Dorsolateral prefrontal cortex (tissue), 120 donors: ENCODE measurements at regions of chr1 and their contacts with region 1.

Region 1: GRCh38 chr1:111656086-111657017 is 36.8 kb downstream of the RAP1A start:
- DNase-seq: peak in 1 of 10 donors; percentile 29
- H3K4me3 ChIP-seq: no peak overlapping the region
- H3K27ac ChIP-seq: peak overlapping the region in 24 of 59 donors; percentile 1 to 57 (median 24)
- H3K27me3 ChIP-seq: no peaks in the 10 kb centered on the region
- CTCF ChIP-seq: peak; percentile 21 to 91 (median 70)

Region 2: DNA sequence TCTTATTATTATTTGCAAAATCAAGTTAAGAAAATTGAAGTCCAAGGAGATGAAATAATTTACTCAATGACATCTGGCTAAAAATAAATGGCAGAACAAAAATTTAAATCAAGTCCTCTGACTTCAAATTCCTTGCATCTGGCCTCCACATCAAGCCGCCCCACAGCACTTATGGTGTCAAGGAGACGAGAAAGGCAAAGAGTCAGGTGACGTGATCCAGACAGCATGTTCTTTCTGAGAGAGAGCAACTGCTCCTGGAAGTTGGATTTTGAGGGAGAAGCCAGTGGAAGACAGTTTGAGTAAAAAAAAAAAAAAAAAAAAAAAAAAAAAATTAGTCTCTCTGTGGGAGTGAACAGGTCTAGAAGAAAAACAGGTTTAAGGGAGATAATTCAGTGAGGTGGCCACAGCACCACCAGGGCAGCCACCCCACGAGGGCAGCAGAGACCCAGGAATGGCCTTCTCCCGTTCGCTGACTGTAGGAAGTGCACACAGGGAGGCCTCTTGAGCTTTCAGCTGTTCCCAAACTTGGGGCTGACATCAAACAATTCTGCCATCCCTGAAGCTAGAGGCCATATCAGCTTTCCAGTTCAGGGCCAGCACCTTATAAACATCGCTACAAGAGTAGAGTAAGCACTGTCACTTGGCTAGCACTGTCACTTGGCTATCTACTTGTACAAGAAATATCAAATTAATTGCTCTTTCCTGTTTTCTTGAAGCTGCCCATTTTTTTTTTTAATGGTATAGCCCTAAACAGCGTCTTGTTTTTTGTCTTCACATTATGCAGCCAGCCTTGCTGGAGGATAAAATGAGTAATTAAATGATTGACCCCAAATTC is 174.7 kb before region 1 on chr1:
- intact Hi-C with region 1: loop called (anchors 1 to 5 kb)
- DNase-seq: peak; percentile 43 to 87 (median 80)
- H3K4me3 ChIP-seq: no peak overlapping the region
- H3K27ac ChIP-seq: peak overlapping the region in 33 of 59 donors; percentile 6 to 80 (median 42)
- H3K27me3 ChIP-seq: no peaks in the 10 kb centered on the region
- CTCF ChIP-seq: peak in 55 of 56 donors; percentile 18 to 88 (median 74)

Region 3: DNA sequence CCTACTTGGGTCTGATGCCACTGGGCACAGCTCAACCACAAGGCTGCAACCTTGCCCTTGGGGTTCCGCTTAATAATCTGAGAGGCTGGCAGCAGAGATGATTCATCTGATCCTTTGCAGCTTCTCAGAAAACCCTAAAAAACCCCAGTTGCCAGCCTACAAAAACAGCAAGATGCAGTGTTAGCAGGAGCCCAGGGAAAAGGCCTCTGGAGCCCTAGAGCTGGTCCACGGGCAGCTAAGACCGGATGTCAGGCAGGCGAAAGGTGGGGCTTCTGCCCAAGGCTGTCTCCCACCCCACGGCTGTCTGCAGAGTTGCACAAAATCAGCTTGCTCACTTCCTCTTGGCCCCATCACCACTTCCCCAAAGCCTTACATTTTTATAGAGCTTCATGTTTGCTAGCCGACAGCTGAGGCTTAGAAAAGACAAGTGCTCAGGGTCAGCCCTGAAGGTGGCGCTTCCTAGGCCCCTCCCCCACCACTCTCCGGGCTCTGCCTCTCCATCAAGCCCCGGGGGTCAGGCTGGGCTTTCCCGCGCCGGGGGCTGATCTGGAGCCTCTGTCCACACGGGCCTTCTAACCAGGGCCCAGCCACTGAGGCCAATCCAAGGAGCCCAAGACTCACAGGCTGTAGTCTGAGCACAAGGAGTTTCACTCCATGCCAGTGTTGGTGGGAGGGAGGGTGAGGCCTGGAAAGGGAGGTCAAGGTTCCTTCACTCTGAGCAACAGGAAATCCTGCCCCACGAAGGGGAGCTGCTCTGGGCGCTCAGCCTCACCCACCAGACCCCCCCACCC is 148.7 kb before region 1 on chr1:
- intact Hi-C with region 1: loop called (anchors 1 to 2 kb)
- DNase-seq: peak in 6 of 10 donors; percentile 46 to 67 (median 54)
- H3K4me3 ChIP-seq: peak overlapping the region in 53 of 59 donors; percentile 16 to 60 (median 39)
- H3K27ac ChIP-seq: peak overlapping the region; percentile 40 to 97 (median 90)
- H3K27me3 ChIP-seq: no peaks in the 10 kb centered on the region
- CTCF ChIP-seq: no peak

Region 4: GRCh38 chr1:111517469-111518225 is 138.7 kb before region 1 on chr1:
- intact Hi-C with region 1: no loop called
- DNase-seq: no peak
- H3K4me3 ChIP-seq: no peak overlapping the region
- H3K27ac ChIP-seq: peak overlapping the region in 22 of 59 donors; percentile 4 to 91 (median 70)
- H3K27me3 ChIP-seq: no peaks in the 10 kb centered on the region
- CTCF ChIP-seq: no peak

Region 5: GRCh38 chr1:111672331-111672730 is 16.0 kb after region 1 on chr1:
- intact Hi-C with region 1: no loop called
- DNase-seq: no peak
- H3K4me3 ChIP-seq: no peak overlapping the region
- H3K27ac ChIP-seq: no peak overlapping the region
- H3K27me3 ChIP-seq: no peaks in the 10 kb centered on the region
- CTCF ChIP-seq: no peak

Region 6: DNA sequence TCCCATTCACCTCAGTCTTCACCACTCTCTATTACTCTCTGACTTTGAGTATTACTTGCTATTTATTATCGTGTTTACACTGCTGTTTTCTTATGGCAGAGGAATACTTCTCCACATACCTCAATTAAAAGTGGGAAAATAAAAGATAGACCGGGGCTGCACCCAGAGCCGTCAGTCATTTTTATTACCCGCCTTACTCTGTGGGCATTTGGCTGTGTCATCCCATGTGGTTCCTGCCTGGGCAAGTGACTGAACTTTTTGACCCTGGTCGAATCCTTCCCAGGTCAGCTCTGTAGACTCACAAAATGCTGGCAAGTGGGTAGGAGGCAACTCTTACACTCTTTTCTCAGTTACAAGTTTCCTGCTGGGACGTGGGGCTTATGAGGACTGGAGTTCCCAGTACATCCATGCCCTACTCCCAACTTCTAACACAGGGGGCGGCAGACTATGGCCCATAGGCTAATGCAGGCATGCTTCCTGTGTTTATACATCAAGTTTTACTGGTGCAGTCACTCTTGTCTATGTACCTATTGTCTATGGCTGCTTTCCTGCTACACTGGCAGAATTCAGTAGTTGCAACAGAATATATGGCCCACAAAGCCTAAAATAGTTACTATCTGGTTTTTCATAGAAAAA is 402.6 kb after region 1 on chr1:
- intact Hi-C with region 1: no loop called
- DNase-seq: no peak
- H3K4me3 ChIP-seq: no peak overlapping the region
- H3K27ac ChIP-seq: no peak overlapping the region
- H3K27me3 ChIP-seq: peaks cover 0 to 8% (median 0%) of the 10 kb centered on the region in 45 donors
- CTCF ChIP-seq: no peak